Dendritic cell treated with granulocyte-macrophage colony-stimulating factor and Interleukin-4, amounts not matched to agents 40 ng/mL and 50 ng/mL, for 4 days (primary cell): ENCODE measurements at regions of chr19 and their contacts with region 1.

Region 1: DNA sequence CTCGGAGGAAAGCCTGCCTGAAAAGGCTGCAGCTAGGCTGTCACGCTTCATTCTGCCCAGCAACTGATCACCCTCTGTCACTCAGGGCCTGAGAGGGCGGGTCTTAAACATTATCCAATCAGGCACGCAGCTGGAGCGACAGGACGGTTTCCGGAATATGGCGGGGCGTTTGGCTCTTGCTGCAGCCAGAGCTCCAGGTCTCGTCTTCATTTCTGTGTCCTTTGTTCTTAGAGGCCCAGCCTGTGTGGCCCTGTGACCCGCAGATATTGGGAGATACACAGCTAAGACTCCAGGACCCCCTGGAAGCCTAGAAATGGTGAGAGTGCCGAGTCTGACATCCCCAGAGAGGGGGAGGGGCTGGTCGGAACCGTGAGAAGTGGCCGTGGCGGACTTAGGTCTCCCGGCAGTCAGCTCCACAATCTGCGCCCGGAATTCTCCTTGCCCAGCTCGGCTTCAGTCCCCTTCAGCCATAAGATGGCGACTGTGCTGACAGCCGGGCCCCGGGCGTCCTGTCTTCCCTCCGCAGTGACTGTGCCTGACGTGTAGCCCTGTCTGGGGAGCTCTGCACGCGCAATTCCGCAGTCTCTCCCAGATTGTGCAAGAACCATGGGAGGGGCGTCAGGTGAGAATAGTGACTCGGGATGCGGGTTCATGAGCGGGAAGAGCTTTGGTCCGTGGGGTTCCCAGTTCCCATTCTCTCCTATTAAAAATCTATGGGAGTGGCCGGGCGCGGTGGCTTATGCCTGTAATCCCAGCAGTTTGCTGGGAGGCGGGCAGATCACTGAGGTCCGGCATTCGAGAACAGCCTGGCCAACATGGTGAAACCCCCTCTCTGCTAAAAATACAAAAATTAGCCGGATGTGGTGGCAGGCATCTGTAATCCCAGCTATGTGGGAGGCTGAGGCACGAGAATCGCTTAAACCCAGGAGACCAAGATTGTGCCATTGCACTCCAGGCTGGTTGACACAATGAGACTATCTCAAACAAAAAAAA is at the start of gene ZNF429:
- H3K4me3 Mint-ChIP-seq: peak within 1 kb of the TSS; percentile 99
- H3K27ac Mint-ChIP-seq: peak within 1 kb of the TSS; percentile 97
- H3K4me1 Mint-ChIP-seq: peaks cover 9% of the 10 kb centered on the region
- H3K27me3 Mint-ChIP-seq: no peaks in the 10 kb centered on the region

Region 2: GRCh38 chr19:21474671-21475181 is 31.0 kb before region 1 on chr19:
- intact Hi-C with region 1: loop called (anchors 2 kb)
- H3K4me3 Mint-ChIP-seq: peak overlapping the region; percentile 87
- H3K27ac Mint-ChIP-seq: peak overlapping the region; percentile 37
- H3K4me1 Mint-ChIP-seq: no peaks in the 10 kb centered on the region
- H3K27me3 Mint-ChIP-seq: peaks cover 1% of the 10 kb centered on the region

Region 3: GRCh38 chr19:21568816-21569493 is 63.2 kb after region 1 on chr19:
- intact Hi-C with region 1: loop called (anchors 2 kb)
- H3K4me3 Mint-ChIP-seq: peak overlapping the region; percentile 97
- H3K27ac Mint-ChIP-seq: peak overlapping the region; percentile 98
- H3K4me1 Mint-ChIP-seq: peaks cover 25% of the 10 kb centered on the region
- H3K27me3 Mint-ChIP-seq: no peaks in the 10 kb centered on the region

Region 4: GRCh38 chr19:21604951-21605476 is 99.3 kb after region 1 on chr19:
- intact Hi-C with region 1: no loop called
- H3K4me3 Mint-ChIP-seq: peak overlapping the region; percentile 70
- H3K27ac Mint-ChIP-seq: peak overlapping the region; percentile 79
- H3K4me1 Mint-ChIP-seq: peaks cover 35% of the 10 kb centered on the region
- H3K27me3 Mint-ChIP-seq: peaks cover 2% of the 10 kb centered on the region